WTC11 (cell line): ENCODE measurements at regions of chr14 and their contacts with region 1.

Region 1: DNA sequence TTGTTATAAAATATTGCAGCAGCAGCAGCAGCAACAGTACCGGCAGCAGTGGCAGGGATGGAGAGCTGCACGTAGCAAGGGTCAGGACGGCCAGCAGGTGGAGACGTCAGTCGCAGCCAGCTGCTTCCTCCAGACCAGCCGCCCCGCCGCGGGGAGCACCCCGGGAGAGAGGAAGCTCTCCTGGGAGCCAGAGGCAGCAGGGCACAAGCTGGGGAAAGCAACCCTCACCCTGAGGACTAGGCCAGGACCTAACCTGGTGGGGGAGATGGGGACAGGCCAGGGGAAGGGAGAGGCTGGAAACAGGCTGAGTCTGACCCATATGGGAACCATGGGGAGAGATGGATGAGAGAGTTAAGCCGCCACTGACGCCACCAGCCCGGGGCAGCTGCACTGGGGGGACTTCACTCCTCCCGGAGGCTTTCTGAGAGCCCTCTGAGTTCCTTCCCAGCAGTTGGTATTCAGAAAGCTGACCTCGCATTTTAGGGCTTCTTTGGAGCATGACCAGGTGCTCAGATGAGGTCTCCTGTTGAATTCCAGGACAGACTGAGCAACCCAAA is 56.3 kb downstream of the SPTB start:
- DNase-seq: peak; percentile 86
- ATAC-seq: peak; percentile 91
- H3K4me3 Mint-ChIP-seq: peak overlapping the region; percentile 31; the same call in 1 of the 2 replicates
- H3K27ac Mint-ChIP-seq: no peak overlapping the region
- H3K4me1 Mint-ChIP-seq: peaks cover 27% of the 10 kb centered on the region
- H3K27me3 Mint-ChIP-seq: peaks cover 6% of the 10 kb centered on the region; the same call in 1 of the 2 replicates
- CTCF ChIP-seq: peak; percentile 69; the same call in 1 of the 2 replicates

Region 2: GRCh38 chr14:64812217-64812811 is 11.1 kb before region 1 on chr14:
- CTCF ChIA-PET with region 1: interaction called, 13 read pairs
- POLR2A ChIA-PET with region 1: no interaction called
- DNase-seq: peak; percentile 73
- ATAC-seq: peak; percentile 98
- H3K4me3 Mint-ChIP-seq: peak overlapping the region; percentile 43
- H3K27ac Mint-ChIP-seq: no peak overlapping the region
- H3K4me1 Mint-ChIP-seq: peaks cover 6% of the 10 kb centered on the region
- H3K27me3 Mint-ChIP-seq: no peaks in the 10 kb centered on the region; the same call in 1 of the 2 replicates
- CTCF ChIP-seq: no peak

Region 3: DNA sequence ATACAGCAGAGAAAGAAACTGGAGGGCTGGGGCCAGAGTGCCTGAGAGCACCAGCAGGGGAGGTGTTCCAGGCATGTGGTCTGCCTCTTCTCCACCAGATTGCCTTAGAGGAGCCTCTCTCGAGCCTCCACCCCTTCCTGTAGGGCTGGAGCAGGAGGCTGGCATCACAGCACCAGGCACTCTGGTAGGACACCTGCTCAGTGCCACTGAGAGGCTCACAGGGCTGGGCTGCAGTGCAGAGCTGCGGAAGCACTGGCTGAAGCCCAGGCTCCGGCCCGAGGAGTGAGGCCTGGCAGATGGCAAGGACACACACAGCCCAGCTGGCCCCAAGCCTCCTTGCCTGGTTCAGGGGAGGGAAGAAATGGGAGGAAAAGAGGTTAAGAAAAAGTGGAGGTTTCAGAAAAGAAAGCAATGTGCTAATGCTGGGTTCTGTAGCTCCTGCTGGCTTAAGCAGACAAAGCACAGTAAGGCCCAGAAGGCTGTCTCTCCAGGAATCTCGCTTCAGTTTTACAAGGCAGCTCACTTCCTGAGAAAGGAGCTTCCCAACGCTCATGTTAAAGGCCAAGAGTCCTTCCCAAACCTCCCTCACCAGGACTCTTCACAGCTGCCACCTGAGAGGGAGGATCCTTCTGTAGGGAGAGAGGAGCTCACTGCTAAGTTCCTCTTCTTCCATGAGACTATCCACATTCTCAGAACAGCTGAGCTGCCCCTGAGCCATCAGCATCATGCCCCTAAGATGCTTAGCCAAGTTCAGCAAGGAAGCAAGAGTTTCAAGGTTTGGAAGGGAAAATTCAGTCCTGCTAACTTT is 32.5 kb after region 1 on chr14:
- CTCF ChIA-PET with region 1: interaction called, 30 read pairs
- POLR2A ChIA-PET with region 1: interaction called, 3 read pairs
- DNase-seq: no peak
- ATAC-seq: peak; percentile 38
- H3K4me3 Mint-ChIP-seq: no peak overlapping the region
- H3K27ac Mint-ChIP-seq: peak overlapping the region; percentile 78
- H3K4me1 Mint-ChIP-seq: peaks cover 36% of the 10 kb centered on the region
- H3K27me3 Mint-ChIP-seq: no peaks in the 10 kb centered on the region
- CTCF ChIP-seq: no peak

Region 4: GRCh38 chr14:64880221-64881121 is 57.1 kb after region 1 on chr14:
- CTCF ChIA-PET with region 1: interaction called, 65 read pairs
- POLR2A ChIA-PET with region 1: interaction called, 4 read pairs
- DNase-seq: peak; percentile 77
- ATAC-seq: peak; percentile 85
- H3K4me3 Mint-ChIP-seq: peak overlapping the region; percentile 88
- H3K27ac Mint-ChIP-seq: peak overlapping the region; percentile 41; the same call in 1 of the 2 replicates
- H3K4me1 Mint-ChIP-seq: peaks cover 18% of the 10 kb centered on the region
- H3K27me3 Mint-ChIP-seq: peaks cover 70% of the 10 kb centered on the region
- CTCF ChIP-seq: no peak

Region 5: GRCh38 chr14:64960762-64961278 is 137.4 kb after region 1 on chr14:
- CTCF ChIA-PET with region 1: interaction called, 14 read pairs
- POLR2A ChIA-PET with region 1: no interaction called
- DNase-seq: peak; percentile 66
- ATAC-seq: peak; percentile 79
- H3K4me3 Mint-ChIP-seq: no peak overlapping the region
- H3K27ac Mint-ChIP-seq: no peak overlapping the region; the same call in 1 of the 2 replicates
- H3K4me1 Mint-ChIP-seq: peaks cover 40% of the 10 kb centered on the region
- H3K27me3 Mint-ChIP-seq: no peaks in the 10 kb centered on the region
- CTCF ChIP-seq: peak; percentile 10; the same call in 1 of the 2 replicates

Region 6: DNA sequence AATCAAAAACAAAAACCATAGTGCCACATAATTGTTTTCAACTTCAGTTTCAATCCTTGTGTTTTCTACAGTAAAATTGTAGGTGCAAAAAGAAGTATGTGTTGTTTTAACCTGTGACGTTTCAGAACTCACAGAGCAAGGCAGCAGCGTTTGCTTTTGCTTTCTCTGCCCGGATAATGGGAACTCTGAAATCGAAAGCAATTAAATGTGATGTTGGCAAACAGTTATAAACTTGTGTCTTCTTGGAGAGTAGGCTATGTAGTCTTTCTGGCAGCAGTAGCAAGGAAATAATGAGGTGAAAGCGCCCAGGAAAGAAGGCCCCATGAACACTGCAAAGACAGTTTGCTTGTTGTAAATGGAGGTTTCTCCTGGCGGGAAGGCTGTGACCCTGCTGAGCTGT is 202.4 kb after region 1 on chr14:
- CTCF ChIA-PET with region 1: no interaction called
- POLR2A ChIA-PET with region 1: no interaction called
- DNase-seq: no peak
- ATAC-seq: no peak
- H3K4me3 Mint-ChIP-seq: no peak overlapping the region
- H3K27ac Mint-ChIP-seq: no peak overlapping the region
- H3K4me1 Mint-ChIP-seq: no peaks in the 10 kb centered on the region
- H3K27me3 Mint-ChIP-seq: no peaks in the 10 kb centered on the region
- CTCF ChIP-seq: no peak